Sigmoid colon (tissue), 7 donors: ENCODE measurements at regions of chr16 and their contacts with region 1.

Region 1: DNA sequence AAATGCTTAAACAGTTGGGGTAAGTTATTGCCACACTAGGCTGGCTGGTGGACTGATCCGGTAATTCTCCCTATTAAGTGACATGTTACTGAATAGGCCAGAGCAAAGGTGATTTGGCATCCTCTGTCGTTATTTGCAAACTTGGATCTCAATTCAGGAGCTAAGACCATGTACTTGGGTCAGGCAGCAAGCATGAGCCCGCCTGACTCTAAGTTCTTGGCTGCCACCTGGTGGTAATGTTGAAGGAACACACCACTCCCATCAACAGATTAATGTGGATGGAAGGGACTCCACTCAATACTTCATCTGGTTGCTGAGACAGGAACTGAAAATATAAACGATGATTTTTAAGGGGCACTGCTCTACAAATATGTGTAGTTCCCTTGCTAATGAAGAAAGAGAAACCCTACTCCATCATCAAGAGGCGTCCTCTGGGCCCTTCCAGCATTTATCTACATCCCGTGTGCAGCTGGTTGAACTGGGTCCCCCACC is 70.8 kb downstream of the EMP2 start:
- DNase-seq: peak; percentile 76
- H3K4me3 ChIP-seq: no peak overlapping the region
- H3K27ac ChIP-seq: no peak overlapping the region
- H3K4me1 ChIP-seq: peaks cover 0 to 4% (median 3%) of the 10 kb centered on the region in 4 donors
- H3K27me3 ChIP-seq: no peaks in the 10 kb centered on the region
- CTCF ChIP-seq: peak; percentile 43 to 78 (median 74)
- EP300 ChIP-seq: no peak
- POLR2A ChIP-seq: no peak

Region 2: GRCh38 chr16:9297437-9298113 is 1212.0 kb before region 1 on chr16:
- intact Hi-C with region 1: loop called (anchors 5 kb)
- DNase-seq: peak; percentile 72
- H3K4me3 ChIP-seq: no peak overlapping the region
- H3K27ac ChIP-seq: no peak overlapping the region
- H3K4me1 ChIP-seq: no peaks in the 10 kb centered on the region
- H3K27me3 ChIP-seq: no peaks in the 10 kb centered on the region
- CTCF ChIP-seq: peak; percentile 44 to 71 (median 60)
- EP300 ChIP-seq: no peak
- POLR2A ChIP-seq: no peak

Region 3: DNA sequence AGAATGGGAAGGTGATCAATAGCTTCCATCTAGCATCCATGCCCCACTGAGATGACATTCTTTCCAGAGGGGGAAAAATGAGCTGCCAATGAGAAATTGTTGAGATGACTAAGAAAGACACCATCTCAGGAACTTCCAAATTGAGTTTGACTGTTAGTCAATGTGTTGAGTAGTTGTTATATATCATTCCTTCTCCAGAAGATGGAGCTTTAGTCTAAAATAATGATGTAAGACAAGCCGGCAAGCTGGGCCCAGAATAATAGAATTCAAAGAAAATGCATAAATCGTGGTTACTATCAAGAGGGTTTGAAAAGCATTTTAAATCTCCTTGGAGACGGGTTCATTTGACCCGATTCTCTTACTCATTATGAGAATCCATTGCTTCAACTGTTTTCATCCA is 194.8 kb before region 1 on chr16:
- intact Hi-C with region 1: loop called (anchors 1 kb)
- DNase-seq: no peak
- H3K4me3 ChIP-seq: no peak overlapping the region
- H3K27ac ChIP-seq: no peak overlapping the region
- H3K4me1 ChIP-seq: no peaks in the 10 kb centered on the region
- H3K27me3 ChIP-seq: no peaks in the 10 kb centered on the region
- CTCF ChIP-seq: no peak
- EP300 ChIP-seq: no peak
- POLR2A ChIP-seq: no peak

Region 4: GRCh38 chr16:10652730-10653590 is 143.4 kb after region 1 on chr16:
- intact Hi-C with region 1: no loop called
- DNase-seq: no peak
- H3K4me3 ChIP-seq: no peak overlapping the region
- H3K27ac ChIP-seq: no peak overlapping the region
- H3K4me1 ChIP-seq: no peaks in the 10 kb centered on the region
- H3K27me3 ChIP-seq: no peaks in the 10 kb centered on the region
- CTCF ChIP-seq: no peak
- EP300 ChIP-seq: no peak
- POLR2A ChIP-seq: no peak

Region 5: GRCh38 chr16:10737068-10737625 is 227.6 kb after region 1 on chr16:
- intact Hi-C with region 1: loop called (anchors 5 kb)
- DNase-seq: no peak
- H3K4me3 ChIP-seq: no peak overlapping the region
- H3K27ac ChIP-seq: peak overlapping the region; percentile 64 to 90 (median 76)
- H3K4me1 ChIP-seq: peaks cover 0 to 29% (median 25%) of the 10 kb centered on the region in 4 donors
- H3K27me3 ChIP-seq: no peaks in the 10 kb centered on the region
- CTCF ChIP-seq: peak; percentile 79 to 94 (median 88)
- EP300 ChIP-seq: no peak
- POLR2A ChIP-seq: no peak